ENCODE measurements at regions of chr1 and their contacts with region 1.

Region 1: DNA sequence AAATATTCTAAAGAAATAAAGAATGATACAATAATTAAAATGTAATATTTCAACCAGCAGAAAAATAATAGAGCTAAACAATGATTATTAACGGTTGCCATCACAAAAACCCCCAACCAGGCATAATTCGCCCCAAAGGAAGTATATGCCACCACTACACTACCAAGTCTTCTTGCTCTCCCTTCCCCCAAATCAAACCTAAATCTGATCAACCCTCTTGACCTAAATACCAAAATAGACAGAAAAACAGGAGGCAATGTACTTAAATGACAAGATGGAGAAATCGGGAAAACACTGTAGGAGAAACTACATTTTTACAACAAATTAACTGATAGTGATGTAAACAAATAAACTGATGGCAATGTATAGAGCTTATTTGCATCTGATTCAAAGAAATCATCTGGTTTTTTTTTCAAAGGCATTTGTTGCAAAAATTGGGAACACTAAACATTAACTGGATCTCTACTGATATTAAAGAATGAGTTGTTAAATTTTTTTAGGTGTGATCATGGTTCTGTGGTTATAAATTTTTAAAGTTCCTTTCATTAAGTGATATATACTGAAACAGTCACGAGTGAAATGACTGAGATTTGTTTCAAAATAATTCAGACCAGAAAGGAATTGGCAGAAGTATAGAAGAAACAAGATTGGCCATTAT is 103.0 kb downstream of the TRIM33 start:
- H3K4me3 ChIP-seq: no peak overlapping the region
- H3K27ac ChIP-seq: no peak overlapping the region
- H3K4me1 ChIP-seq: no peaks in the 10 kb centered on the region
- CTCF ChIP-seq: no peak

Region 2: DNA sequence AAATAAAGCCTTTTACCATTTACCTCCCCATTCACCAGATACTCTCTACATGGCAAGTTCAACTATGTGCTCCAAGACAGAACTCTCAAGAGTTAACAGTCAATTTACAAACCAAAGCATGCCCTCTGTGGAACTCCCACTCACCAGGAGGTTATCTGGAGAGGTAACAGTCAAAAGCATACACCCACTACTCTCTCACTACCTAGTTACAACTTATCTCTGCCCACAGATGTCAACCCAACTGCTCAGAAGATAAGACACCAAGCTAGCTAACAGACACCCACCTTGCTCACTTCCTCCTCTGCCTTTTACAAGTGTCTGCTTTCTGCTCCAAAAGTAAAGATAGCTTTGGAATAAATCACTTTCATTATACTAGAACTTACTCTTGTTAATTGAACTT is 28.0 kb before region 1 on chr1:
- CTCF ChIA-PET with region 1: no interaction called
- POLR2A ChIA-PET with region 1: no interaction called
- H3K4me3 ChIP-seq: no peak overlapping the region
- H3K27ac ChIP-seq: no peak overlapping the region
- H3K4me1 ChIP-seq: no peaks in the 10 kb centered on the region
- CTCF ChIP-seq: no peak

Region 3: DNA sequence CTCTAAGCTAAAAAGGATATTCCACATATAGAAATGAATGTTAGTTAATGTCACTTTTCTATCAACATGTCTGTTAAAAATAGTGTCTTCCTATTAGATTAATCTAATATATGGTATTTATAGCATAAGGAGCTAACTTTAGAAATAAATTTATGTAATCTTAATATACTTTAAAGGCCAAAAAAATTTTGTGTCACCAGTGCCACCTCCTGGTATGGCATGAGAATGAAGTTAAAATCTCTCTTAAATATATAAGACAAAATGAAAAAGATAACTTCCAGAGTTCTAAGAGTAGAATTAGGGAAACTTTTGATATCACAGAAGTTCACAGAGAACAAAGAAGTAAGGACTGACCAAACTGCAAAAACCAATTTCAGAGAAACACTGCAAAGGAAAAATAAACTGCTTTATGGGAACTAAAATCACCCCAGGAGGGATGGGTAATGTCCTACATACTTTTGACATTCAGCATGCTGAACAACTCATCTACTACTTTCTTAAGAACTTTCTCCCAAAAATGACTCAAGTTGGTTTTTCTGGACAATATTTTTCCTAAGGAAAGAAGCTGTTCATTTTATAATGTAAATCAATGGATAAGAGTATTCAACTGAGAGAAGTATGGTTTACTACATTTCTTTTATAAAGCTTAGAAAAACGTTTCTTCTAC is 20.2 kb after region 1 on chr1:
- CTCF ChIA-PET with region 1: interaction called, 10 read pairs
- POLR2A ChIA-PET with region 1: no interaction called
- H3K4me3 ChIP-seq: no peak overlapping the region
- H3K27ac ChIP-seq: no peak overlapping the region
- H3K4me1 ChIP-seq: no peaks in the 10 kb centered on the region
- CTCF ChIP-seq: no peak

Measured in HEK293 (cell line).